GM10248 (cell line): ENCODE measurements at regions of chr22 and their contacts with region 1.

Region 1: DNA sequence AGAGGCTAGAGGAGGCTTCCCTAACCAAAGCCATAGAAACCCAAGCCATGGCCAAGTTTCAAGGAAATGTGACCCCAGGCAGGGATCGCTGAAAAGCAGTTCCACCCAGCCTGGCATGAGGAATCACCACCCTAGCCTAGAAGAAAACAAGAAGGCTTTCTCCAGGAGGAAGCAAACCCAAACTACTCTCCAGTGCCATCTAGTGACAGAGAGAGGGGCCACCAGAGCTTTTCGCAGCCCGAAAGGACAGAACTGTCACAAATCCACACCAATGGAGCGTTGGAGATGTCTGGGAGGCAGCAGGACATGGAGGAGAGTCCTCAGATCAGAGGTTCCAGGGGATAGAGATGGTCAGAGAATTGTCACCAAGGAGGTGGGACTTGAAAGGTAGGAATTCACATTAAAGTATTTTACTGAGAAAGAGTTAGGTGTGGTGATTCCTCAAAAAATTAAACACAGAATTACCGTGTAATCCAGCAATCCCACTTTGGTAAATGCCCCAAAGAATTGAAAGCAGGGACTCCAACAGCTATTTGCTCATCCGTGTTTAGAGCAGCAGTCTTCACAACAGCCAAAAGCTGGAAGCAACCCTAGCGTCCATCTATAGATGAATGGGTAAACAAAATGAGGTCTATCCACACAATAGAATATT is 67.3 kb upstream of the NUP50 start:
- DNase-seq: peak; percentile 78
- CTCF ChIP-seq: peak; percentile 80

Region 2: DNA sequence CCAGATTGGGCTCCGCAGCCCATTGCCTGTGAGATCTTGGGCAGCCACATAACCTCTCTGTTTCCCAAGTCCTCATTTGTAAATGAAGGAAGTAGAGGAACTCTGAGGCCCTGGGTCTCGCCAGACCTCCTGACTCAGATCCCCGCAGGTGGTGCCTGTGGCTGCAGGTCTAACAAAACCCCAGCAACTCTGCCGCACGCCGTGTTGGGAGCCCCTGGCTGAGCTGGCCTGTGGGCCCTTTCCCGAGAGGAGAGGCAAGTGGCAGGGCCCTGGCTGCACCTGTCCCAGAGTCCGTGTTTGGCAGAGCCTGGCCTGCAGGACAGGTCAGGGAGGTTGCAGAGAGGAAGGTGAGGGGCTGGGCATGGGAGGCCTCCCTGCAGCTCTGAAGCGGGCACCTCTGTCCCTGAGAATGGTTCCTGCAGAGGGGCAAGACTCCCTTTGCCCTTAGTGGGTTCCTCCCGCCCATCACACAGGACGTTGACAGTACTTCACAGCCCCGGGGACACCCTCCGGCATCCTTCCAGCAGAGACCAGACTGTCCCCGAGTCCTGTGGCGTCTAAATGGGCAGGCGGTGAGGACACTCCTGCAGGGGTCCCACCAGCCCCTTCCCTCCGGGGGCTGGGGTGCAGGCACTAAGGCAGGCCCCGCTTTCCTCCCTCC is 276.3 kb before region 1 on chr22:
- CTCF ChIA-PET with region 1: interaction called, 16 read pairs
- POLR2A ChIA-PET with region 1: no interaction called
- DNase-seq: no peak
- CTCF ChIP-seq: no peak

Region 3: DNA sequence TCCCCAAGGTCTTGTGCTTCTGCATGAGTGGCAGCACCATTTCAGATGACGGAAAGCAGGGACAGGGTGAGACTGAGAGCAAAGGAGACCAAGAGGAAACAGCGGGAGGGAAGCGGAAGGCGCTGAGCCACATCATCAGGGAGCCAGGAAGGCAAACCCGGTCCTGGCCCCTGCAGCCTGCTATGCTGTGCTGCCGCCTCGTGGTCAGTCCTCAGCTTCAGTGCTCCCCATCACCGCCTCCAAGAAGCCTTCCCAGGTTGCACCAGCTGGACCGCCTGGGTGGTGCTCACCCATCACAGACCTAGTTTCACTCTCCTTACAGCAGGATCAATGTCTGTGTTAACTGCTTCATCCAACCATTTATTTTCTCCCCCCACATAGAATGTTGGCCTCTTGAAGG is 13.6 kb before region 1 on chr22:
- CTCF ChIA-PET with region 1: interaction called, 11 read pairs
- POLR2A ChIA-PET with region 1: no interaction called
- DNase-seq: no peak
- CTCF ChIP-seq: peak; percentile 24

Region 4: GRCh38 chr22:45127866-45128265 is 31.5 kb after region 1 on chr22:
- CTCF ChIA-PET with region 1: no interaction called
- POLR2A ChIA-PET with region 1: no interaction called
- DNase-seq: no peak
- CTCF ChIP-seq: no peak

Region 5: GRCh38 chr22:45397806-45398205 is 301.4 kb after region 1 on chr22:
- CTCF ChIA-PET with region 1: no interaction called
- POLR2A ChIA-PET with region 1: no interaction called
- DNase-seq: no peak
- CTCF ChIP-seq: peak; percentile 9